ENCODE measurements at regions of chr15 and their contacts with region 1.

Region 1: DNA sequence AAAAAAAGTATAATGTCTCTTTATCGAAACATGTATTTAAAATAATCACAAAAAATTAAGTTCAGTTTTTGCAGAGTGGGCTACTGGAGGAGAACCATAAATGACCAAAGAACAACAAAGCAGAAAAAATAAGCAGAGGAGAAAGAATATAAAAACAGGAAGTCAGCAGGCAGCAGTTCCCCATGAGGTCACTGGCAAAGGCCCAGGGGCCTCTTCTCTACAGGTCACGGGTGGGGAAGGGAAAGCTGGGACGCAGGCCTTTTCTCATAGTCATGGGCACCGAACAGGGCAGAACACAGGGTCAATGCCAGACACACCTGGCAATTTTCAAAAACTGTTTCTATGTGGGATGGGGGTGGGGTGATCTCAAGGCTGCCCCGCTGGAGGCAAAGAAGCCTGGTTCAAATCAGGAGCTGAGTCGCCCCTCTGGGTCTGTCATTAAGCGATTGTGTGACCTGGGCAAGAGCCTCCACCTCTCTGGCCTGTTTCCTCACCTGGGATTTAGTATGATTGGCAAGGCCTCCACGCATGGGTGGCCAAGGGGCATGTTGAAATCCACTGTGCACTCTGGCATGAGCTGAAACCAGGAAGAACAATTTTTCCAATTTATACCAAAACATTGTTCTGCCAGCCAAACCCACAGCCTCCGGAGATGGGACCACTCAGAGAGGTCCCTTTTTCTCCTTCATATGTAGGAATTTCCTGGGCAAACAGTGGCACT is 43.8 kb upstream of the UACA start:
- DNase-seq: peak; percentile 88

Region 2: GRCh38 chr15:70463460-70463881 is 343.7 kb before region 1 on chr15:
- intact Hi-C with region 1: loop called in 1 of 2 experiments (anchors 5 kb)
- DNase-seq: peak; percentile 18

Region 3: DNA sequence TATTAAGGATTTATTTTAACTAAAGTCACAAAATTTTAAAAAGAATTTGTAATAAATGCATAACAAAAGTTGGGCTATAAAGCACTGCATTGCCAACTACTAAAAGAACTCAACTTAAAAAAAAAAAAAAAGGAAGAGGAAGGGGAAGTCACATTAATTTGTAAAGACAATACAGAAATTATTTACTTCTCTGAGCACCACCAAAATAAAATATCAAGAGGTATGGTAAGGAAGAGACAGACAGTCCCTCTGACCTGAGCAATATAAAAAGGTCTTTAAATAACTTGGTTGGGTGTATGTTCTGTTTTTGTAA is 127.3 kb before region 1 on chr15:
- intact Hi-C with region 1: loop called (anchors 5 to 10 kb)
- DNase-seq: no peak

Region 4: GRCh38 chr15:70770863-70771262 is 36.3 kb before region 1 on chr15:
- intact Hi-C with region 1: loop called in 1 of 2 experiments (anchors 1 kb)
- DNase-seq: no peak

Region 5: GRCh38 chr15:70853821-70854666 is 46.9 kb after region 1 on chr15 and contains the start of gene LARP6:
- intact Hi-C with region 1: loop called in 1 of 2 experiments (anchors 1 kb)
- DNase-seq: no peak
- total RNA-seq, gene LARP6: 38.0 to 44.7 TPM

Region 6: GRCh38 chr15:71168478-71168834 is 361.3 kb after region 1 on chr15:
- intact Hi-C with region 1: no loop called
- DNase-seq: no peak